Cardiac septum (tissue), 1 donor: ENCODE measurements at regions of chr10 and their contacts with region 1.

Region 1: DNA sequence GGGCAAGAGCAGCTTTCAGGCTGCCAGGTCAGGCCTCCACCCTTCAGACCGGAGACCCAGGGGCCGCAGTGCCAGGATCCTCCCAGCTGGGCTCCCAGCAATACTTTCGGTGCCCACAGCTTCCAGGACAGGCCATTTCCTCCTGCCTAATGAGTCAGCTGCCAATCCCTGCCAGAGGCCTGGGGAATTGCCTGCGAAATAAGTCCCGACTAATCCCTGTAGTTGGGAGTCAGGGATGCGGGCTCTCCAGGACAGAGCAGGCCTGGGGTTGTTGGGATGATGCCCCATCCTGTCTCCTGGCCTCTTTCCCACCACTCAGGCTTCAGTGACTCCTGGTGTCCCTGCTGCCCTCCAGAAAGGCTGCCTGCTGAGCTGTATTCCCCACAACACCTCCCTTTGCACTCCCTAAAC is 143.5 kb upstream of the UNC5B start:
- DNase-seq: peak; percentile 86

Region 2: DNA sequence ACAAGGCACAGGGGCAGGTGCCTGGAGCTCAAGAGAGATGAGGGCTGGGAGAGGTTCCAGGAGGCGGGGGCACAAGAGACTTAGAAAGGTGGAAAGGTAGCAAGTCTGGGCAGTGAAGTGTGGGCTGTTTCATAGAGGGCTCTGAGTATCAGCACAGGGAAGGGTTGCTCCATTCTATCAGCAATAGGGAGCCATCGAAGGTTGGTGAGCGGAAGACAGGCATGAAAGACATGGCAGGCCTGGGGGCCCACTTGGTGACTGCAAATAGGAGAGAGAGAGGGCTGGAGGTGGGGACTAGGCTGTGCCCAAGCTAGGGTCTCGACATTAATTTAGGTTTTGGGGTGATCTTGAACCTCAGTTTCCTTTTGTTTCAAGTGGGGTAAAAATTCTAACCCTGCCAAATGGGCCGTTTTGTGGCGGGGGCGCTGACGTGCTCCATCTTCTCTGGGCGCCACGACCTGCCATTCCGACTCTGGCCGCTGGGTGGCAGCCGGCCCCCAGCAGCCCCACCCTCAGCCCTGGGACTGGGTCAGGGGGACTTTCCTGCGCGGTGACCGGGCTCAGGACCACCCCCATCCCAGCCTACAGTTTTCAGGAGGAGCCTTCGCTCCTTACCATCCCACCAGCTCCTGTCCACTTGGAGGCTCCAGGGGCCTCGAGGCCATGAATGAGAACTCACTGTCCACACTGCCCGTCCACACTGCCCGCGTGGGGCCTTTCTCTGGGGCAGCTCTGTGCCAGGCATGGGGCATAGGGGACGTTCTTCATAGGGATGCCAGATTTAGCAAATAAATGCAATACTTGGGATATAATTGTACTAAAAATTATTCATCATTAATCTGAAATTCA is 143.3 kb before region 1 on chr10:
- intact Hi-C with region 1: loop called (anchors 10 kb)
- DNase-seq: no peak

Region 3: DNA sequence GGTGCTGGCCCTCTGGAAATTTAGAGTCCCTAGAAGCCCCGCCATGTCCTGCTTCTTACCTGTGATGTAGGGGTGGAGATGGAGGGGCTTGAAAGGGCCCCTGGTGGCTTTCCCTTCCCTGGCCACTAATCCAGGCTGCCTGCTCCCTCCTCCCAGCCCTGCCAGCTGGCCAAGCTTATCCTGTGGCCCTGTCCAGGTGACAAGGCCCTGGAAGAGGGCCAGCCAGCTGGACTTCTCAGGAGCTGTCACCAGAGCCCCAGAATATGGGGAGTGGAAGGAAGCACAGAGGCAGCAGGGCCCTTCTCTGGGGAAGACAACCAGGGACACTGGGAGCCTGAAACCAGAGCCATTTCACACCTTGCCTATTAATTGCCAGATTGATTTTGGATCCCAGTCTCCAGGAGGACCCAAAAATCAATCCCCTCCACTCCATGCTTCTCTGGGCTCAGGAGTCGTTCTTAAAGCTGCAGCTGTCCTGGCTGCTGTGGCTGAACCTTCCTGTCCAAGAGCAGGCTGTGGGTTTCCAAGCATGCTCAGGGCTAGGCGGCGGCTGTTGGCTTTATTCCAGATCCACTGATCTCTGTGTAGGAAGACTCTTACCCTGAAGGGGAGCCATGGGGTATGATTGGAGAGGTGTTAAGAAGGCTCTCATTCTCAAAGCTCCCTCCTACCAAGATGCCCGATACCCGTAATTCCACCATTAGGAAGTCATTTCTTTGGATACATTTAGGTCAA is 127.9 kb before region 1 on chr10:
- intact Hi-C with region 1: no loop called
- DNase-seq: no peak

Region 4: GRCh38 chr10:71187600-71187999 is 118.7 kb after region 1 on chr10:
- intact Hi-C with region 1: loop called (anchors 5 kb)
- DNase-seq: no peak

Region 5: DNA sequence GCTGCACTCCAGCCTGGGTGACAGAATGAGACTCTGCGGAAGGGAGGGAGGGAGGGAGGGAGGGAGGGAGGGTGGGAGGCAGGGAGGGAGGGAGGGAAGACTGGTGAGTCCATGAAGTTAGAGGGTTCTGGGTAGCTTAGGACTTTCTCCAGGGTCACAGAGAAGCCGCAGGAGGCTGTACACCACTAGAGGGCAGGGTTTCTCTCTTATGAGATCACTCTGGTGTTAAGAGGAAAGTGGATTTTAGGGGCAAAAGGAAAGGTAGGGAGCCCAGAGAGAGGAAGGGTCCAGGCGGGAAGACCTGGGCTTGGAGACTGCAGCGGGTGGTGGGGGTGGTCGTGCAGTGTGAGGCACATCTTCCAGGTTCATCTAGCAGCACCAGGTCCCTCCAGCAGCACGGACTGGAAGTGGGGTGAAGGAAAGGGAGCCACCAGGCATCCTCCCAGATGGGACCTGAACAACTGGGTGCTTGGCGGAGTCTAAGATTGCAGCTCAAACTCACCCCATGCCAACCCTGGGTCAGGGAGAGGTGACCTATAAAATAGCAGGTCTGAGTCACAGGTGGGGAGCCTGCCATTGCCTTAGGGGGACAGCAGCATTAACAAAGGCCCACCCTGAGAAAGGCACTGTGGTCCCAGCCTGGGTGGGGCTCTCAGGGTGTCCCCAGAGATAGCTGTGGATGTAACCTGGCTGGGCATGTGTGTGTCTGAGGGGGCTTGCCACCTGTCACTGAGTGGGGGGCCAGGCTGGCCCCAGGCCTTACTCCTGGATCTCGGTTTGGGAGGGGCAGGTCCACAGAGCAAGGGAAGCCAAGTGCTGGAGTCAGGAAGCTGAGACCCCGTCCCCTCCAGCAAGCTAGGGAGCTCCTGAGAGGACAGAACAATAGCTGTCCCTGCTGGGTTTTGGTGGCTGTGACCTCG is 201.7 kb after region 1 on chr10:
- intact Hi-C with region 1: loop called (anchors 5 kb)
- DNase-seq: no peak